MCF 10A (cell line): ENCODE measurements at regions of chr7 and their contacts with region 1.

Region 1: GRCh38 chr7:110568932-110569331 is 522.0 kb upstream of the LRRN3 start:
- DNase-seq: no peak
- H3K4me3 Mint-ChIP-seq: no peak overlapping the region
- H3K27ac Mint-ChIP-seq: no peak overlapping the region
- H3K4me1 Mint-ChIP-seq: peaks cover 14% of the 10 kb centered on the region
- H3K27me3 Mint-ChIP-seq: no peaks in the 10 kb centered on the region
- CTCF ChIP-seq: no peak

Region 2: GRCh38 chr7:110534241-110534931 is 34.5 kb before region 1 on chr7:
- CTCF ChIA-PET with region 1: interaction called, 3 read pairs
- POLR2A ChIA-PET with region 1: interaction called, 4 read pairs
- intact Hi-C with region 1: loop called (anchors 5 kb)
- DNase-seq: peak; percentile 90
- H3K4me3 Mint-ChIP-seq: peak overlapping the region; percentile 65
- H3K27ac Mint-ChIP-seq: peak overlapping the region; percentile 98
- H3K4me1 Mint-ChIP-seq: peaks cover 32% of the 10 kb centered on the region
- H3K27me3 Mint-ChIP-seq: no peaks in the 10 kb centered on the region
- CTCF ChIP-seq: peak; percentile 20

Region 3: GRCh38 chr7:110600956-110601355 is 32.0 kb after region 1 on chr7:
- CTCF ChIA-PET with region 1: no interaction called
- POLR2A ChIA-PET with region 1: no interaction called
- intact Hi-C with region 1: no loop called
- DNase-seq: no peak
- H3K4me3 Mint-ChIP-seq: no peak overlapping the region
- H3K27ac Mint-ChIP-seq: no peak overlapping the region
- H3K4me1 Mint-ChIP-seq: no peaks in the 10 kb centered on the region
- H3K27me3 Mint-ChIP-seq: no peaks in the 10 kb centered on the region
- CTCF ChIP-seq: no peak

Region 4: DNA sequence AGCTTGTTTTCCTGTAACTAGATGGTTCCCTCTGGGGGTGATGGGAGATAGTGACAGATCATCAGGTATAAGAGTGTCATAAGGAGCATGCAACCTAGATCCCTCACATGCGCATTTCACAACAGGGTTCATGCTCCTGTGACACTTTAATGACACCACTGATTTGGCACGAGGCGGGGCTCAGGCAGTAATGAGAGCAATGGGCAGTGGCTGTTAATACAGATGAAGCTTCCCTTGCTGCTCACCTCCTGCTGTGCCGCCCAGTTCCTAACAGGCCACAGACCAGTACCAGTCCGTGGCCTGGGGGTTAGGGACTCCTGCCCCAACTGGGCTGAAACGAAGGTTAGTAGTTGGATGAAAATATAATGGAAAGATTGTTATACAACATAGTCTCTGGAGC is 320.4 kb after region 1 on chr7:
- CTCF ChIA-PET with region 1: no interaction called
- POLR2A ChIA-PET with region 1: no interaction called
- intact Hi-C with region 1: no loop called
- DNase-seq: no peak
- H3K4me3 Mint-ChIP-seq: no peak overlapping the region
- H3K27ac Mint-ChIP-seq: no peak overlapping the region
- H3K4me1 Mint-ChIP-seq: no peaks in the 10 kb centered on the region
- H3K27me3 Mint-ChIP-seq: no peaks in the 10 kb centered on the region
- CTCF ChIP-seq: no peak